GM10248 (cell line): ENCODE measurements at regions of chr19 and their contacts with region 1.

Region 1: GRCh38 chr19:4909897-4910593 is 744 bp downstream of the UHRF1 start:
- DNase-seq: peak; percentile 98
- CTCF ChIP-seq: no peak

Region 2: DNA sequence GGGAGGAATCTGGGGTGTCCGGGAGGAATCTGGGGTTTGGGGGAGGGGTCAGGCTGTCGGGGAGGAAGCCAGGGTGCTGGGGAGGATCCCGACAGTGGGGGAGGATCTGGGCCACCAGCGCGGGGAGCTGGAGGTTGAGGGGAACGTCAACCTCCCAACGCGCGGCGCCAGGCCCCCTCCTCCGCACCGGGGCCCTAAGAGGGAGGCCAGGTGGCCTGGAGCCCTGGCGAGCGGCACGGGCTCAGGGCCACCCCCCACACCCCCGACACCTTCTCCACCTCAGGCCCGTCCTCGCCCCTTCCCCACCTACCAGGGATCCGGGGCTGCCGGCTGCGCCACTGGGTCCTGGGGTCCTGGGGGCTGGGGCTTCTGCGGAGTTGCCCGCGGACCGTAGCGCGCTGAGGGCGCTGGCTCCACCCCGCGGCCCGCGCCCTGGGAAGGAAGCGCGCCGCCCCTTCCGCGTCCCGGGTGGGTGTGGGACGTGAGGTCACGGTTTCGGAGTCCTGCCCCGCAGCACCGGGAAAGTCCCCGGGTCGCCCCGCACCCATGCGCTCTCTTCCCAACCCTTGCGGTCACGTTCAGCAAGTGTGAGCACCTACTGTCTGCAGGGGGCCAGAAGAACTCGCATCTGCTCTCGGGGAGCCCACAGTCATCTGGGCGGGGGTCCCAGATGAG is 78.6 kb before region 1 on chr19 and contains the start of gene TICAM1:
- CTCF ChIA-PET with region 1: interaction called, 12 read pairs
- POLR2A ChIA-PET with region 1: no interaction called
- DNase-seq: peak; percentile 85
- CTCF ChIP-seq: no peak

Region 3: GRCh38 chr19:4867534-4868285 is 42.3 kb before region 1 on chr19 and contains the start of gene PLIN3:
- CTCF ChIA-PET with region 1: interaction called, 77 read pairs
- POLR2A ChIA-PET with region 1: interaction called, 6 read pairs
- DNase-seq: peak; percentile 100
- CTCF ChIP-seq: no peak

Region 4: GRCh38 chr19:4933528-4933927 is 23.5 kb after region 1 on chr19:
- CTCF ChIA-PET with region 1: interaction called, 18 read pairs
- POLR2A ChIA-PET with region 1: no interaction called
- DNase-seq: no peak
- CTCF ChIP-seq: no peak

Region 5: DNA sequence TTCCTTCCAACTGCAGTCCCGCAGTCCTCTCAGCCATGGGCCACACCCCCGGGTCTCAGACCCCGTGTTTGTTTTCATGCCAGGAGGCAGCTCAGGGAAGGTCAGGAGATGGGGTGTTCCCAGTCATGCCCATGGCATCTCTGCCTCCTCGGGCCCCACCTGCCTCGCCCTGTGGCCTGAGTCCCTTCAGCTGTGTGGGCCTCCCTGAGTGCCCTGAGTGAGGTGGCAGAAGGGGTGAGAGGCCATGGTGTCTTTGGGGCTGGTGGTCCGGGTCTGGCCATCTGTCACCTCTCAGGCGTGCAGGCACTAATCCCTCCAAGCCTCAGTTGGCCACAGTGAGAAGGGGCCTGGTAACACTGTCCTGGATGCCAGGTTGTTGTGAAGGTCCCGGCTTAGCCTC is 47.9 kb after region 1 on chr19:
- CTCF ChIA-PET with region 1: interaction called, 11 read pairs
- POLR2A ChIA-PET with region 1: interaction called, 3 read pairs
- DNase-seq: no peak
- CTCF ChIP-seq: no peak

Region 6: GRCh38 chr19:5031231-5032100 is 121.4 kb after region 1 on chr19:
- CTCF ChIA-PET with region 1: interaction called, 12 read pairs
- POLR2A ChIA-PET with region 1: no interaction called
- DNase-seq: peak; percentile 93
- CTCF ChIP-seq: peak; percentile 97

Region 7: DNA sequence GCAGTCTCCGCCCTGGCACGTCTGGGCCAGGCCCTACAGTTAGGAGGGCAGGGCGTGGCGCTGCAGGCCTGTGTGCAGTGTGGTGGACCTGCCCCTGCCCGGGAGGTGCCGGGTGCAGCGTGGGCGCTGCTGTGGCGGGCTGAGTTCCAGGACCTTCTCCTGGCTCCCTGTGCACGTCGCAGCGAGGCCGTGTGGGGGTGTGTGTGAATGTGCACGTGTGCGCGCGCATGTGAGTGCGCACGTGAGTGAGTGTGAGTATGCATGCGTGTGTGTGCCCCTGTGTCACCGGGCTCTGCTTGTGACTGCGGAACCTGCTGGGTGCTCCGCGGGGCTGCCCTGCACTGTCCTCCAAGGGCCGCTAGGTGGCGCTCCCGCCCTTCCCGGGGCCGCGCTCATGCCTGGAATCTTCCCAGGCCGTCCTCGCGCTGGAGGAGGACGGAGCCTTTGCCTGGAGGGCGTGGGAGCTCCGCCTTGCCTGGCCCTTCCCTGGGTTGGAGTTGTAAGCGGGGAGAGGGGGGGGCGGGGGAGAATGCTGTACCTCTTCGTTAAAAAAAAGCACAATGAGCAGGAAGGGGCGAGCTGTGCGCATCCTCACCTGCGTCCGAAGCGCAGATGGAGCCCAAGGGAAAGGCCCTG is 138.2 kb after region 1 on chr19:
- CTCF ChIA-PET with region 1: interaction called, 10 read pairs
- POLR2A ChIA-PET with region 1: no interaction called
- DNase-seq: peak; percentile 86
- CTCF ChIP-seq: peak; percentile 90